HAP-1 (cell line): ENCODE measurements at regions of chr22 and their contacts with region 1.

Region 1: DNA sequence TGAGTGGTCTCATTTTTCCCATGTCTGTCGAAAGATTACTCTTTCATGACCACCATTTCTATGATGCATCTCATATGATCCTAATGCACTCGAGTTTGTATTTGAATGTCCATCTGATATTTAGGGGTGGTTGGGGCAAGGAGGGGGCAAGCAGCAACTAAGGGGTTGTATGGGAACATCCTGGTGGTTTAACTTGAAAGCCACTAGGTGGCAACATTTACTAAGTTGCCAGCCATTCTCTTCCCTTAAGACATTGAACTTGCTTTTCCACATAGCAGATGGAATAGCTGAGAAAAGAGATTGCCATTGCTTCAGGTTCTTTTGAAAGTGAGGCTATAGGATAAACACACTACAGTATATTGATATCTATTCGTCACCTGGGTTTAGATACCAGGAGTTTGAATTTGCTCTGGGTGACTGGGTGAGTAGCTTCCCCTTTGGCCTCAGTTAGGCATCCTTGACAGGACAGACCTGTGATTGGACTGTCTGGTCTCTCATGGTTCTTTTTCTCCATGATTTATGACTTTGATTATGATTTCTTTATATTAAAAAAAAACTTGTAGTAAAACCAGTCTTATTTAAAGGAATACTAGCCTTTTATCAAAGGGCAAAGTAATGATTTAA is 32.4 kb downstream of the NF2 start:
- DNase-seq: peak in 1 of 2 experiments; percentile 73
- H3K4me3 ChIP-seq: no peak overlapping the region
- H3K4me1 ChIP-seq: peaks cover 2% of the 10 kb centered on the region; the same call in 1 of the 2 replicates
- H3K27me3 ChIP-seq: no peaks in the 10 kb centered on the region

Region 2: DNA sequence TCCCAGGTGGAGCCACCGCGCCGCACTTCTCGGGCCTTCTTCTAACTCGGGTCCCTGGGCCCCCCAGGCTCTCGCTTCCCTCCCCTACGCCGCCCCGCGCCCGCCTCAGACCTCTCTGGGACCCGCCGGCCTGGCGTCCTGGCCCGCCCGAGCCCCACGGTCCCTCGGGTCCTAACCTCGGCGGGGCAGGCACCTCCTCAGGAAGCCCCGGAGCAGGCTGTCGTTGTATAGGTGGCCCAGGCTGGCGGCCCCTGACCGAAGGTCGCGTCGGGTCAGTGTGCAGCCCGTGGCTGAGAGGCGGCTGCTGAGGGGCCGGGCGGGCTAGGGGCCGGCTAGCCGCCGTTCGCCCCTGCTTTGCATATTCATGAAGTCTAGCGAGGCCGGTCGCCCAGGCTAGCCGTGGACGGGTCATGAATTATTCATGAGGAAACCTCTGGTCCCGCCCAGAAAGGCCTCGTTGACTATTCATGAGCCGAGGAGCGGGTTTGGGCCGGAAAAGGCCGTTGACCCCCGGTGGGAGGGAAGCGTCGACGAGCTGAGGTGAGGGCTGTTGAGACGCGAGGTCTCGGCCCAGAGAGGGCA is 444.2 kb after region 1 on chr22 and contains the start of gene HORMAD2:
- in situ Hi-C with region 1: loop called (anchors 10 kb)
- DNase-seq: no peak
- H3K4me3 ChIP-seq: no peak within 1 kb of the TSS
- H3K4me1 ChIP-seq: peaks cover 12% of the 10 kb centered on the region
- H3K27me3 ChIP-seq: no peaks in the 10 kb centered on the region